ENCODE measurements at regions of chr19 and their contacts with region 1.

Region 1: GRCh38 chr19:1054102-1055027 is 12.6 kb upstream of the ARHGAP45 start:
- DNase-seq: no peak
- H3K4me3 ChIP-seq: no peak overlapping the region
- H3K27ac ChIP-seq: no peak overlapping the region
- H3K4me1 ChIP-seq: no peaks in the 10 kb centered on the region
- H3K27me3 ChIP-seq: no peaks in the 10 kb centered on the region
- CTCF ChIP-seq: no peak

Region 2: GRCh38 chr19:1073063-1073955 is 18.9 kb after region 1 on chr19:
- CTCF ChIA-PET with region 1: interaction called, 7 read pairs
- POLR2A ChIA-PET with region 1: interaction called, 16 read pairs
- intact Hi-C with region 1: no loop called
- DNase-seq: no peak
- H3K4me3 ChIP-seq: no peak overlapping the region
- H3K27ac ChIP-seq: no peak overlapping the region
- H3K4me1 ChIP-seq: peaks cover 15% of the 10 kb centered on the region
- H3K27me3 ChIP-seq: peaks cover 7% of the 10 kb centered on the region
- CTCF ChIP-seq: no peak

Measured in A673 (cell line).